Panc1 (cell line): ENCODE measurements at regions of chr14 and their contacts with region 1.

Region 1: DNA sequence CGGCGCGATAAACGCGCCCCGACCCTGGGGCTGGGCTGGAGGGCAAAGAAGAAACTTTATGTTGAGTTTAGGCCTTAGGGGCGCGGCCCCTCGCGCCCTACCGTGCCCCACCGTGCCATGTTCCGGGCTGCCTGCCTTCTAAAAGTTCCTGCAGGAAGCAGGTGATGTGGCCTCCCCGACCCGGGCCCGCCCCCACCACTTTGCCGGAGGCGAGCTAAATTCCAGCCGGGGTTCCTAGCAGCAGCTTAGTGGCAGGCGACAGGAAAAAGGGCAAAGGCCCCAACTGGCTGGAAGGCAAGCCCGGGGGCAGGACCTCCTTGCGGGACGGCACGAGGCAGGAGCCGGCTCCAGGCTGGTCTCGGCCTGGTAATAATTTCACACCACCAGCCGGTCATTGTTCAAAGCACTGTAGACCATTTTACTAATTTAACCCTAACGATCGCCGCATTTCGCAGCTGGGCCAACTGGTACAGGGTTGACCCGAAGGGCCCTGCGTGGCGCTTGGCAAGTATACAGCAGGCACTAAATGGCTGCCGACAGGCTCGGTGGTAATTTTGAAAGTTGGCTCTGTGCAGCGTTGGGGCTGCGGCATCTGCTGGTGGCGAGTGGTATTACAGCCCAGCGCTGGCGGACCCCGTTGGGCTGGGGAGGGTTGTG is 895 bp upstream of the CCDC88C start:
- DNase-seq: peak; percentile 56
- ATAC-seq: peak; percentile 62
- H3K4me3 ChIP-seq: peak overlapping the region; percentile 50 to 55
- H3K27ac ChIP-seq: peak overlapping the region; percentile 71
- H3K4me1 ChIP-seq: peaks cover 6% of the 10 kb centered on the region
- H3K27me3 ChIP-seq: no peaks in the 10 kb centered on the region
- CTCF ChIP-seq: peak; percentile 95

Region 2: DNA sequence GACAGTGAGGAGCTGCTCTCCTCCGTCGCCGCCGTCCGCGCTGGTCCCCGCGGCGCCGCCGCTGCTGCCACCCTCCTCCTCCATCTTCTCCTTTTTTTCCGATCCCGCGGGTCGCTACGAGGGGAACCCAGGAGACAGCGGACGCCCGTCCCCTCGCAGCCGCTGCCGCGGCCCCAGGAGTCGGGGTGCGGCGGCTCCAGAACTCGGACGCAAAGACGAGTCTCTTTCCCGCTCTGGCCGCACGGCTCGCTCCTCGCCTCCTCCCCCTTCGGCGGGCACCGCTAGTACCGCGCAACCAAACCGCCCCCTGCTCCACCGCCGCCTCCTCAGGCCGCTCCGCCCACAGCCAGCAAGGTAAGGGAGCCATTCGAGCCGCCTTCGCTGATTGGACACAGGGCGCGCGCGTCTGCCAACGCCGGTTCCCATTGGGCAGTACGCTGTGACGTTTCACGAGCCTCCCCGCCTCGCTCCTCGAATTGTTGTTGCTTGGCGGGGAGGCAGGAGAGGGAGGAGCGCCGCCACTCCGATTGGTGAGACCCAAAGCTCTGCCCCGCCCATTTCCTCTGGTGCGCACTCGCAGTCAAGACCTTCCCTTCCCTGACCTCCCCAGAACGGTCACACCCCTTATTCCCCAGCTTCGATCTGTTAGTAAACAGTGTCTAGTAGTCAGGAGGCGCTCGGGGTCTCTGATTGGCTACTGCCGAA is 358.0 kb before region 1 on chr14 and contains the start of gene RPS6KA5:
- CTCF ChIA-PET with region 1: no interaction called
- POLR2A ChIA-PET with region 1: no interaction called
- in situ Hi-C with region 1: no loop called
- intact Hi-C with region 1: no loop called
- DNase-seq: peak; percentile 94
- ATAC-seq: peak; percentile 95
- H3K4me3 ChIP-seq: peak within 1 kb of the TSS; percentile 67 to 75
- H3K27ac ChIP-seq: peak within 1 kb of the TSS; percentile 74
- H3K4me1 ChIP-seq: peaks cover 4% of the 10 kb centered on the region; the same call in 1 of the 2 replicates
- H3K27me3 ChIP-seq: no peaks in the 10 kb centered on the region
- CTCF ChIP-seq: 0 out of 2 replicates have a peak, but pooled peaks have one; percentile 4
- total RNA-seq, gene RPS6KA5: 2.6 TPM

Region 3: GRCh38 chr14:91323671-91324605 is 94.6 kb before region 1 on chr14:
- CTCF ChIA-PET with region 1: interaction called, 4 read pairs
- POLR2A ChIA-PET with region 1: no interaction called
- in situ Hi-C with region 1: no loop called
- intact Hi-C with region 1: loop called (anchors 2 kb)
- DNase-seq: peak; percentile 22
- ATAC-seq: peak; percentile 82
- H3K4me3 ChIP-seq: no peak overlapping the region
- H3K27ac ChIP-seq: no peak overlapping the region
- H3K4me1 ChIP-seq: no peaks in the 10 kb centered on the region
- H3K27me3 ChIP-seq: no peaks in the 10 kb centered on the region
- CTCF ChIP-seq: peak; percentile 90

Region 4: DNA sequence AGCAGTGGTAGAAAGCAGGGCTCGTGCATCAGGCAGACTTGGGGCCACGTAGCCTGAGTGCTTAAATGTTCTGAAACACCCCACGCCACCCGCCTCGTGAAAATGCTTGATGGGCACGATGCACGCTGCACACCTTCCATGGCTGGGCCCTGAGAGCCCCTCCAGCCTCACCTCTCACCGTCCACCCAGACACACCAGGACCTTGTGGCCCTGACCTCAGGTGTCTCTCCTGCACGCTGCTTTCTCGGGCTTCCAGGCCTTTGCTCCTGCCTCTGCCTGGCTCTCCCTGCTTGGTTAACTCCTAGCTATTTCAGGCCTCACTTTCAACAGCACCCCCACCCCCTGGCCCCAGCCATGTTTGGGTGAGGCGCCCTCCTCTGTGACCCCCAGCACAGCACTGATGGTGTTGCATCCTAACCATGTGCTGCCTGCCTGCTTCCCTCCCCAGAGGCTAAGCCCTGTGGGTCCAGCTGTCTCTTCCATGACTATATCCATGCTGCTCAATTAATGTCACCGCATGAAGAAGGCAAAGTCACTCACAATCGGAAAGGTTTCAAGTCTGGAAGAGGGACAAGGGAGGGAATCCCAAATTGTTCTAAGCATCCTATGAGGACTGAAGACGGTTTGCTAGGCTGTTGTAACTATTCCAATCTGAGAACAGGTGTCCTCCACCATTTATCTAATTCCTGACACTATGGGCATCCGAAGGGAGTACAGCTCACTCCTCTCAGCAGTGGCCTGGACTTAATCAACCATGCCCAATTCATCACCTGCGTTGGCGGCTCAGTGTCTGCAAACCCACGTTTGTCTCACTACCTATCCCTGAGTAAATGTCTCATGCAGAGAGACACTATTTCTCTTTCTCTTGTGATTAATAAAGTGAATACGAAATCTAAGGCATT is 83.1 kb before region 1 on chr14:
- CTCF ChIA-PET with region 1: no interaction called
- POLR2A ChIA-PET with region 1: no interaction called
- in situ Hi-C with region 1: no loop called
- intact Hi-C with region 1: no loop called
- DNase-seq: no peak
- ATAC-seq: no peak
- H3K4me3 ChIP-seq: no peak overlapping the region
- H3K27ac ChIP-seq: no peak overlapping the region
- H3K4me1 ChIP-seq: peaks cover 4% of the 10 kb centered on the region; the same call in 1 of the 2 replicates
- H3K27me3 ChIP-seq: no peaks in the 10 kb centered on the region
- CTCF ChIP-seq: no peak

Region 5: GRCh38 chr14:91466192-91466591 is 47.7 kb after region 1 on chr14:
- CTCF ChIA-PET with region 1: no interaction called
- POLR2A ChIA-PET with region 1: no interaction called
- in situ Hi-C with region 1: no loop called
- intact Hi-C with region 1: no loop called
- DNase-seq: no peak
- ATAC-seq: no peak
- H3K4me3 ChIP-seq: no peak overlapping the region
- H3K27ac ChIP-seq: no peak overlapping the region
- H3K4me1 ChIP-seq: no peaks in the 10 kb centered on the region
- H3K27me3 ChIP-seq: no peaks in the 10 kb centered on the region
- CTCF ChIP-seq: no peak